OCI-LY7 (cell line): ENCODE measurements at regions of chr17 and their contacts with region 1.

Region 1: DNA sequence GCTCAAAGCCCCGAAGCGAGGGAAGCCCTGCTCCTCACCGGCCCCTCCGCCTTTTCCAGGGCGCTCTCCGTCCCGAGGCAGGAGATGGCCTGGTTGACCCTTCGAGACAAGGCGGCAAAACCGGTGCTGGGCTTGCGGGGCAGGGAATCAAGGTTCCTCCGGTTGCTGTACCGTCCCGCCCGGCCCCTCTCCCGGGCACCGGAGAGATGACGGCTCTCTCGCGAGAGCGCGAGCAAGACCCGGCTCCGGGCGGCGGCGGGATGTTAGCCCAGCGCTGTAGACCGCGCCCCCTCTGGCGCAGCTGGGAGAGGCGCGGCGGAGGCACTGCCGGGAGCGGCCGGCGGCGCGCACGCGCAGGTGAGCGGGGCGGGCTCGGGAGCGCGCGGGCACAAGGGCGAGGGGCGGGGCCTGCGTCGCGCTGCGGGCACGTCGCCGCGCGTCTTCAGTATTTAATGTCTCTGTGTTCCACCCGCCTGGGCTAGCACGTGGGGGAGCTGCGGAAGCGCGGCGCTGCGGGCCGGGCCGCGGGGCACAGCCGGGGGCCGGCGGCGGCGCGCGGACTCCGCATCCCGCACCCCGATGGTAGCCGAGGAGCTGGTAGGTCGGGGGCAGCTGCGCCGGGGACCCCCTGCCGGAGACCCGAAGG is at the start of gene AKAP1:
- DNase-seq: peak; percentile 98
- H3K4me3 ChIP-seq: peak within 1 kb of the TSS; percentile 99
- H3K27ac ChIP-seq: peak within 1 kb of the TSS; percentile 62
- H3K4me1 ChIP-seq: peaks cover 31% of the 10 kb centered on the region
- CTCF ChIP-seq: no peak; the same call in 1 of the 2 replicates
- total RNA-seq, gene AKAP1: 49.0 and 56.2 TPM in 2 replicates

Region 2: DNA sequence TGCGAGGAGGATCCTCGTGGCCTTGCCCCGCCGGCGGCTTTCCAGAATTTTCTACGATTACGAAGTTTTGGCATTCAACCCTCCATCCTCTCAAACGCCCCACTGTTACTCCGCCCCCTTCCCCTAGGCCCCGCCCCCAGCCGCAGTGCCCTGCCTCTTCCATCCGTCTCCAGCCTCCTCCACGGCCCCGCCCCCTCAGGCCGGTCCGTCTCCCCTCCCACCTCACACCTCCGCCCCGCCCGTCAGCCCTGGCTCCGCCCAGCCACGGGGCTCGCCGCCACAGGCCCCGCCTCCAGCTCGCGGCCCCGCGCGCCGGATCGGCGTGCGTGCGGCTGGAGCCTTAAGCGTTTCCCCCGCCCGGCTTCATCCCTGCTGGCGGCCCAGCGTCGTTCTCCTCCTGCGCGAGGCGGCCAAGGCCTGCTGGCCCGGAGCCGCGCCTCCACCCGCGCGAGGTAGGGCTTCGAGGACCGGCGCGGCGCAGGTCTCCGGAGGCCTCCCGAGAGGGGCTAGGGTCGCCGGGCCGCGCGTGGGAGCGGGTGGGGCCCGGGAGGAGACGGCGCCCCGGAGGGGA is 251.0 kb before region 1 on chr17 and contains the starts of genes C17orf67 and DGKE:
- CTCF ChIA-PET with region 1: no interaction called
- POLR2A ChIA-PET with region 1: no interaction called
- intact Hi-C with region 1: loop called (anchors 5 kb)
- DNase-seq: peak; percentile 93
- H3K4me3 ChIP-seq: peak within 1 kb of the TSS; percentile 77
- H3K27ac ChIP-seq: peak within 1 kb of the TSS; percentile 52
- H3K4me1 ChIP-seq: peaks cover 59% of the 10 kb centered on the region
- CTCF ChIP-seq: no peak
- total RNA-seq, gene C17orf67: 5.2 and 5.8 TPM in 2 replicates
- total RNA-seq, gene DGKE: 6.2 and 8.6 TPM in 2 replicates

Region 3: GRCh38 chr17:56960596-56961538 is 124.1 kb before region 1 on chr17 and contains the start of gene COIL:
- CTCF ChIA-PET with region 1: no interaction called
- POLR2A ChIA-PET with region 1: no interaction called
- intact Hi-C with region 1: loop called (anchors 5 kb)
- DNase-seq: peak; percentile 95
- H3K4me3 ChIP-seq: peak within 1 kb of the TSS; percentile 90
- H3K27ac ChIP-seq: peak within 1 kb of the TSS; percentile 89
- H3K4me1 ChIP-seq: peaks cover 35% of the 10 kb centered on the region
- CTCF ChIP-seq: peak; percentile 95
- total RNA-seq, gene COIL: 20.5 and 24.8 TPM in 2 replicates

Region 4: DNA sequence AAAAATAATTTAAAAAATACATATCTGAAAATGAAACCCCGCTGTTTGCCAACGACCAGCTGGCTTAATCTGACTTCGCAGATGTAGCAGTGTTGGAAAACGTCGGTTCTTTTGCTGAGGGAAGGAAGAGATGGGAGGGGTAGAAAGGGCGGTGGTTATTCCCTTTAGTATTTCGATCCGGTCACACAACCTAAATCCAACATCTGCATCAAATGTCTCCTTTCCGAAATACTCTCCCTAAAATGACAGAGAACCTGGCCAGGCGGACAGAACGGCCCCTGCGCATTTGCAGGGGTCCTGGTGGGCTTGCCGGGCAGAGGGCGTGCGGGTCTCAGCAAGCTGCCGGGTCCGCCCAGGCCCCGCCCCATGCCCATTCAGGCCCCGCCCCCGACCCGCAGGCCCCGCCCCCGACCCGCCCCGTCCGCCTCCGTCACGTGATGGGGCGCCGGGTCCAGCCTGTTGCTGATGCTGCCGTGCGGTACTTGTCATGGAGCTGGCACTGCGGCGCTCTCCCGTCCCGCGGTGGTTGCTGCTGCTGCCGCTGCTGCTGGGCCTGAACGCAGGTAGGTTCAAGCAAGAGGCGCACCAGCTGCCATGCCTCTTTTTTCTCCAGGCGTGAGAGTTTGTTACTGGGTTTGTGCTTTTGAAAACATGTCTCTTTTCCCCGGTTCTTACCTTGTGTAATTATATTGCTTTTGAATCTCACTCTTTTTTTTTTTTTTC is 107.1 kb before region 1 on chr17 and contains the start of gene SCPEP1:
- CTCF ChIA-PET with region 1: no interaction called
- POLR2A ChIA-PET with region 1: no interaction called
- intact Hi-C with region 1: loop called (anchors 1 kb)
- DNase-seq: peak; percentile 90
- H3K4me3 ChIP-seq: peak within 1 kb of the TSS; percentile 78
- H3K27ac ChIP-seq: peak within 1 kb of the TSS; percentile 45
- H3K4me1 ChIP-seq: peaks cover 25% of the 10 kb centered on the region
- CTCF ChIP-seq: 0 out of 2 replicates have a peak, but pooled peaks have one; percentile 16
- total RNA-seq, gene SCPEP1: 36.5 and 48.2 TPM in 2 replicates

Region 5: DNA sequence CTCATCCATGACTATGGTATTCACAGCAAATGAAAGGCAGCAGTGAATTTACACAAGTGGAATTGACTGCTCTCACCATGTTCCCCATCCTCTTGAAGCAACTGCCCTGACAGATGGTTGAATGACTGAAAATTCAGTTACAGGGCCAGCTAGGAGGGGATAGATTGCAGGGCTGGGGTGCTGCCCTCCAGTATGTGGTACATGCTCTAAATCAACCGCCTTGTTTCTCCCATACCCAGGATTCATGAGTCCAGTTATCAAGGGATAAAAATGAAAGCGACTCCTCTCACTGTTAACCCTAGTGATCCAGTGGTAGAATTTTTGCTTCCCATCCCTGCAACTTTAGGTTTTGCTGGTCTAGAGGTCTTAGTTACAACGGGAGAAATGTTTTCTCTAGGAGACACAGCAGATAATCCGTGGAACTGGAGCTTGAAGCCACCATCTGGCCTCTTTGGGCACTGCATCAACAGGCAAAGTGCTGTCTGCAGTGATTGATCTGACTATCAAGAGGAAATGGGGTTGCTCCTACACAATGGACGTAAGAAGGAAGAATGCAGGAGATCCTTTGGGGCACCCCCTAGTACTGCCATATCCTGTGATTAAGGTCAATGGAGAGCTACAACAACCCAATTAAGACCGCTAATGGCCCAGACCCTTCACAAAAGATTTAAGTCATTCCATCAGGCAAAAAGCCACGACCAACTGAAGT is 75.0 kb before region 1 on chr17:
- CTCF ChIA-PET with region 1: no interaction called
- POLR2A ChIA-PET with region 1: no interaction called
- intact Hi-C with region 1: loop called (anchors 5 kb)
- DNase-seq: peak; percentile 81
- H3K4me3 ChIP-seq: no peak overlapping the region
- H3K27ac ChIP-seq: peak overlapping the region; percentile 17
- H3K4me1 ChIP-seq: peaks cover 38% of the 10 kb centered on the region
- CTCF ChIP-seq: peak; percentile 86

Region 6: GRCh38 chr17:57142925-57143324 is 58.0 kb after region 1 on chr17:
- CTCF ChIA-PET with region 1: no interaction called
- POLR2A ChIA-PET with region 1: no interaction called
- intact Hi-C with region 1: no loop called
- DNase-seq: no peak
- H3K4me3 ChIP-seq: no peak overlapping the region
- H3K27ac ChIP-seq: no peak overlapping the region
- H3K4me1 ChIP-seq: no peaks in the 10 kb centered on the region
- CTCF ChIP-seq: no peak